Activated B cell treated with CpG ODN at 0.5 μM for 24 hours (primary cell): ENCODE measurements at regions of chr16 and their contacts with region 1.

Region 1: GRCh38 chr16:67993189-67994039 is 5.9 kb downstream of the DPEP2 start:
- DNase-seq: peak; percentile 88
- ATAC-seq: peak; percentile 77
- H3K4me3 Mint-ChIP-seq: peak overlapping the region; percentile 77
- H3K27ac Mint-ChIP-seq: peak overlapping the region; percentile 98
- H3K4me1 Mint-ChIP-seq: peaks cover 78% of the 10 kb centered on the region
- H3K27me3 Mint-ChIP-seq: no peaks in the 10 kb centered on the region
- CTCF ChIP-seq: peak; percentile 47

Region 2: GRCh38 chr16:67883872-67884261 is 109.5 kb before region 1 on chr16:
- CTCF ChIA-PET with region 1: interaction called, 4 read pairs
- POLR2A ChIA-PET with region 1: interaction called, 3 read pairs
- intact Hi-C with region 1: loop called (anchors 1 kb)
- DNase-seq: peak; percentile 75
- ATAC-seq: peak; percentile 90
- H3K4me3 Mint-ChIP-seq: no peak overlapping the region
- H3K27ac Mint-ChIP-seq: no peak overlapping the region
- H3K4me1 Mint-ChIP-seq: no peaks in the 10 kb centered on the region
- H3K27me3 Mint-ChIP-seq: no peaks in the 10 kb centered on the region
- CTCF ChIP-seq: peak; percentile 63

Region 3: DNA sequence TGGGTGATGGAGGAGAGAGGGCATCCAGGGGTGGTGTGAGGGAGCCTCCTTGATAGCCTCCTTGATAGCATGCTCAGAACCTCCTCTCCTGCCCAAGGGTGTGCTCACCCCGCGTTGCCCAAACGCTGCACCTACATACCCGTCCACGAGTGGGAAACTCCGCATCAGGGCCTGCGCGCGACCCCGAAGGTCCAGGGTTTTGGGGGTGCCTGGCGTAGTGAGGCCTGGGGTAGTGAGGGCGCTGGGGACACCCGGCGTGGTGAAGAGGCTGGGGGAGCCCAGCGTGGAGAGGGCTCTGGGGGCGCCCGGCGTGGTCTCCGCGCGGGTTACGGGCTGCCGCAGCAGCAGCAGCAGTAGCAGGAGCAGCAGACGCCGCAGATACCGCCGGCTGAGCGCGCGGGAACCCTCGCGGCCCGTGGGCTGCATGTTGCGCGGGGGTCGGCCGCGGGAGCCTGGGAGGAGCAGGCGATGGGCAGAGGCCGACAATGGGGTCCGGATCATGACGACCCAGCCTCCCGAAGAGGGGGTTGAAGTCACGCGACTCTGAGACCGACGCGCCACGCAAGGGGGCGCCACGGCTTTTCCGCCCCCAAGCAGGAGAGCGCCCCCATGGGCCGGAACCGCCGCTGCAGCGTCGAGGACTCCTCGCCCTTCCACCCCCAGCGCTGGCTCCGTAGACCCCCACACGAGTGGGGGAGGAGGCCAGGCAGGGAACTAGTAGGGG is 13.3 kb before region 1 on chr16 and contains the start of gene DPEP3:
- CTCF ChIA-PET with region 1: interaction called, 3 read pairs
- POLR2A ChIA-PET with region 1: interaction called, 15 read pairs
- intact Hi-C with region 1: loop called (anchors 1 kb)
- DNase-seq: no peak
- ATAC-seq: no peak
- H3K4me3 Mint-ChIP-seq: no peak within 1 kb of the TSS
- H3K27ac Mint-ChIP-seq: no peak within 1 kb of the TSS
- H3K4me1 Mint-ChIP-seq: peaks cover 33% of the 10 kb centered on the region
- H3K27me3 Mint-ChIP-seq: no peaks in the 10 kb centered on the region
- CTCF ChIP-seq: no peak
- total RNA-seq, gene DPEP3: 0.29 and 0.38 TPM in 2 replicates

Region 4: DNA sequence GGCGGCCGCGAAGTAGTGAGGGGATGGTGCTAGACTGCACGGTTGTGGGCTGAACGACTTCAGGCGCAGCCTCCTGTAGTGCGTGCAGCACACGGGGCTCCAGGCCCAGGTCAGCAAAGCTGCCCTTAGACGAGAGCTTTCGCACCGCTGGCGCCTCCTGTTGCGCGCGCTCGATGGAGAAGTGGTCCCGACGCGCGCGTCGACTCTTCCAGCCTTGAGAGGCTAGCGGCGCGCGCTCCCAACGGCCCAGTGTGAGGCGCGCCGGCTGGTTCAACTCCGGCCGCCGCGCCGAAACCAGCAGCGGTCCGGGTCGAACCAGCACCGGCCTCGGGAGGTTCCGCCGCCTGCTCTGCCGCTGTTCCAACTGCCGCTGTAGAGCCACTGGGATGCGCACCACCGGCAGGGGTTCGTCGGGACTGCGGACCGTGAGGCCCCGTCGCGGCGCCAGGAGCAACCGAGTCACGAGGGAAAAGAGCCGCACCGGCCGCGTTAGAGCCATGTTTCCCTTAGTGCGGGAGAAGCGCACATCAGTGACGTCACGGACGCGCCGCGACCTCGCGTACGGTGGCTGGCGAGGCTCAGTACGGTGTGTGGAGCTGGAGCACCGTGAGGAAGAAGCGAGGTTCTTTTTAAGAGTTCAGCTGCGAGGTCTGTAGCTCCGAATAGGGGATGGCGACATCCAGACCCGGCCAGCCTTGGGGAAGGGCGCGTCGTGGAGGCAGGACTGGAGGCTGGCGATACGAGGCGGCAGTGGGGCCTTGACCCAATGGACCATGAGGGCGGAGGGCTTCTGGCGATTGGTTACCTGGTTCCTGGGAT is 29.5 kb after region 1 on chr16 and contains the starts of genes DDX28 and DUS2:
- CTCF ChIA-PET with region 1: interaction called, 5 read pairs
- POLR2A ChIA-PET with region 1: interaction called, 47 read pairs
- intact Hi-C with region 1: loop called (anchors 1 kb)
- DNase-seq: peak; percentile 97
- ATAC-seq: peak; percentile 93
- H3K4me3 Mint-ChIP-seq: peak within 1 kb of the TSS; percentile 99
- H3K27ac Mint-ChIP-seq: peak within 1 kb of the TSS; percentile 97
- H3K4me1 Mint-ChIP-seq: peaks cover 31% of the 10 kb centered on the region
- H3K27me3 Mint-ChIP-seq: no peaks in the 10 kb centered on the region
- CTCF ChIP-seq: no peak
- total RNA-seq, gene DDX28: 19.2 and 19.7 TPM in 2 replicates
- total RNA-seq, gene DUS2: 54.2 and 62.0 TPM in 2 replicates